Calu3 (cell line): ENCODE measurements at regions of chr7 and their contacts with region 1.

Region 1: GRCh38 chr7:130896898-130897514 is 163.0 kb upstream of the KLF14 start:
- DNase-seq: peak; percentile 80
- H3K4me3 Mint-ChIP-seq: peak overlapping the region; percentile 82
- H3K27ac Mint-ChIP-seq: peak overlapping the region; percentile 97
- H3K4me1 Mint-ChIP-seq: peaks cover 82% of the 10 kb centered on the region
- H3K27me3 Mint-ChIP-seq: no peaks in the 10 kb centered on the region
- CTCF ChIP-seq: peak; percentile 82

Region 2: GRCh38 chr7:130875265-130875741 is 21.7 kb before region 1 on chr7:
- CTCF ChIA-PET with region 1: interaction called, 6 read pairs
- intact Hi-C with region 1: loop called (anchors 1 kb)
- DNase-seq: peak; percentile 85
- H3K4me3 Mint-ChIP-seq: no peak overlapping the region
- H3K27ac Mint-ChIP-seq: peak overlapping the region; percentile 45
- H3K4me1 Mint-ChIP-seq: peaks cover 56% of the 10 kb centered on the region
- H3K27me3 Mint-ChIP-seq: no peaks in the 10 kb centered on the region
- CTCF ChIP-seq: peak; percentile 89

Region 3: DNA sequence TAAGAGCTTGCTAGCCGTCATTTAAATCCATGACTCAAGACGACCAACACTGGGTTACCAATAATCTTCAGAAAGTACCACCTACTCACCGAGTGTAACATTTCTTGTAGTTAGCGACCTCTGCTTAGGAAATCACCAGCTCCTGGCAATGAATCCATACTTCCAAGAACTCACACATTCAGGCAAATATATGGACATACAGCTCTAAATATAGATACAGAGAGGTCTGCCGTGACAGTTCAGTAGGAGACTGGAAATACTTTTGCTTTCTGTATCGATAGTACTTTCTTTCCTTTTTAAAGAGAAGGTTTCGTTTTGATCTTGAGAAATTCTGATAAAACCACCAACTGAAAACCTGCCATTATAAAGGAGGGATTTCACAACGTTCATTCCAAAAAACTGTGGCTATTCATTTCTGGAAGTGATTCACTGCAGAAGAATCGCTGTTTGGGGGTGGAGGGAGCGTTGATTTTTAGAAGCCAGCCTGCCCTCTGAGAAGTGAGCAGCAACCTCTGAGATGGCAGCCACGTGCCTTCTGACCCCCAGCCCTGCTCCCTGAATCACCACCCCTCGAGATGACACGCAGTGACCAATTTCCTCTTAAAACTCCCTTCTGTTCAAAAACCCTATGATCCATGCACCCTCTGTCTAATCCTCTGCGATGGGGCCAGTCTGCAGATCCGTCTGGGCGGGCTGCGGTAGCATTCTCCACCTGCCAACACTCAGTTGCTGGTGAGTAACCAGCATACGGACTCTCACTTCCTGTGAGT is 16.0 kb after region 1 on chr7:
- CTCF ChIA-PET with region 1: interaction called, 25 read pairs
- intact Hi-C with region 1: no loop called
- DNase-seq: peak; percentile 88
- H3K4me3 Mint-ChIP-seq: peak overlapping the region; percentile 94
- H3K27ac Mint-ChIP-seq: peak overlapping the region; percentile 97
- H3K4me1 Mint-ChIP-seq: peaks cover 54% of the 10 kb centered on the region
- H3K27me3 Mint-ChIP-seq: no peaks in the 10 kb centered on the region
- CTCF ChIP-seq: no peak

Region 4: DNA sequence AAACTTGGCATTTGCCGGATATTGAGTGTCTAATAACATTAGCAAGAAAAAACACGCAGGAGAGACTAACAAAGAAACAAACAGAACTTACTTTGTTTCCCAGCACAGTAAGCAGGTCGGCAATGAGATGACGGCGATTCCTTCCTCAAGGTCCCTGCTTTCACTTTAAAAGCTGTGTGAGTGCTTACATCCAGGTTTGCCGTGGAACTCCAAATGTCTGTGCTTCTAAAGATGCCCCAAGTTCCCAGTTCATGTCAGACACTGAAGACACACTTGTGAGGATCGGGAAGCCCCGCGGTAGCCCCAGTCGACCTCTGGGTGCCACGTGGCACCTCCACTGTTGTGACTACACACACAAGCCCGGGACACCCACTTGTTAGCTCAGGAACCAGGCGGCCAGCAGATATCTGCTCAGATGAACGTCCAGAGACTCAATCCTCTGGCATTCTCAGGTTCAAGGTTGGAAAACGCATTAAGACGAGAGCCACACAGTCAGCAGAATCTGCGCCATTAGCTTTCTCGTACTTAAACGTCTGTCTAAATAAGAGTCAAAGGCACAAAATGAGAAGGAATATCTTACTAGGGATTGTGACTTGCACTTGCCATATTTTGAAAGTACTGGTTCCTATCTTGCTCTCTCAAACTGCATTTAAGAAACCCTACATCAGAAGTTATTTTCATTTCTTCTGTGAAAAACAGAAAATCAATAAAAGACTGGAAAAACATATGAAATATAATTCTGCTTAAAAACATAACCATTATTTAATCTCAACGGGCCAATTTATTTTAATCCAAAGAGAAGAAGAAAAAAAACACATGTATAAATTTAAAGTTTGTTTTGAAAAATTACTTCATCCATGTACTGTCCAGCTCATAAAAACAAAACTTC is 44.6 kb after region 1 on chr7:
- CTCF ChIA-PET with region 1: interaction called, 8 read pairs
- intact Hi-C with region 1: loop called (anchors 1 kb)
- DNase-seq: peak; percentile 68
- H3K4me3 Mint-ChIP-seq: peak overlapping the region; percentile 90
- H3K27ac Mint-ChIP-seq: peak overlapping the region; percentile 97
- H3K4me1 Mint-ChIP-seq: peaks cover 46% of the 10 kb centered on the region
- H3K27me3 Mint-ChIP-seq: no peaks in the 10 kb centered on the region
- CTCF ChIP-seq: no peak

Region 5: DNA sequence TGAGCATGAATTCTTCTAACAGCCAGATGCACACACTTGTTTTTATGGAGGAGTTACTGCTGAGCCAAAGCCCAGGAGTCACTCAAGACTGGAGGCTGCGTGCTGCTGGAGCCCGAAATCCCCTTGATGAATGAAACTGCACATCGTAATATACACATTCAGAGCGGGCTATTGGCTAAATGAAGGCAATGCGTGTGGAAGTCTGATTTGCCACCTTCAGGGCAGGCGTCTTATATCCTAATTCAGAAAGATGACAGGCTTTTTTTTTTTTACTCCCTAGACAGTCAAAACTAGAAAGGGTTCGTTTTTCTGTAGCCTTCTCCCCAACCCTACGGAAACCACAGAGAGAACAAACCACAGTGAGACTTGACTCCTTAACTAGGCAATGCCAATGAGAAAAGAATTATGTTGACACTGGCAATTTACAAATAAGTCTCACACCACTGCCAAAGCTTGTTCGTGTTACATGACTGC is 64.2 kb after region 1 on chr7:
- CTCF ChIA-PET with region 1: interaction called, 12 read pairs
- intact Hi-C with region 1: no loop called
- DNase-seq: no peak
- H3K4me3 Mint-ChIP-seq: no peak overlapping the region
- H3K27ac Mint-ChIP-seq: peak overlapping the region; percentile 100
- H3K4me1 Mint-ChIP-seq: peaks cover 46% of the 10 kb centered on the region
- H3K27me3 Mint-ChIP-seq: no peaks in the 10 kb centered on the region
- CTCF ChIP-seq: no peak

Region 6: GRCh38 chr7:130975731-130976130 is 78.7 kb after region 1 on chr7:
- CTCF ChIA-PET with region 1: no interaction called
- intact Hi-C with region 1: no loop called
- DNase-seq: no peak
- H3K4me3 Mint-ChIP-seq: no peak overlapping the region
- H3K27ac Mint-ChIP-seq: no peak overlapping the region
- H3K4me1 Mint-ChIP-seq: peaks cover 7% of the 10 kb centered on the region
- H3K27me3 Mint-ChIP-seq: no peaks in the 10 kb centered on the region
- CTCF ChIP-seq: no peak

Region 7: GRCh38 chr7:131007394-131008330 is 110.7 kb after region 1 on chr7:
- CTCF ChIA-PET with region 1: interaction called, 8 read pairs
- intact Hi-C with region 1: loop called (anchors 2 kb)
- DNase-seq: peak; percentile 79
- H3K4me3 Mint-ChIP-seq: peak overlapping the region; percentile 22
- H3K27ac Mint-ChIP-seq: peak overlapping the region; percentile 87
- H3K4me1 Mint-ChIP-seq: peaks cover 75% of the 10 kb centered on the region
- H3K27me3 Mint-ChIP-seq: no peaks in the 10 kb centered on the region
- CTCF ChIP-seq: peak; percentile 28

Region 8: GRCh38 chr7:131040467-131040932 is 143.5 kb after region 1 on chr7:
- CTCF ChIA-PET with region 1: interaction called, 11 read pairs
- intact Hi-C with region 1: loop called (anchors 5 kb)
- DNase-seq: peak; percentile 62
- H3K4me3 Mint-ChIP-seq: no peak overlapping the region
- H3K27ac Mint-ChIP-seq: no peak overlapping the region
- H3K4me1 Mint-ChIP-seq: peaks cover 28% of the 10 kb centered on the region
- H3K27me3 Mint-ChIP-seq: no peaks in the 10 kb centered on the region
- CTCF ChIP-seq: peak; percentile 62